BJ (cell line): ENCODE measurements at regions of chr19 and their contacts with region 1.

Region 1: DNA sequence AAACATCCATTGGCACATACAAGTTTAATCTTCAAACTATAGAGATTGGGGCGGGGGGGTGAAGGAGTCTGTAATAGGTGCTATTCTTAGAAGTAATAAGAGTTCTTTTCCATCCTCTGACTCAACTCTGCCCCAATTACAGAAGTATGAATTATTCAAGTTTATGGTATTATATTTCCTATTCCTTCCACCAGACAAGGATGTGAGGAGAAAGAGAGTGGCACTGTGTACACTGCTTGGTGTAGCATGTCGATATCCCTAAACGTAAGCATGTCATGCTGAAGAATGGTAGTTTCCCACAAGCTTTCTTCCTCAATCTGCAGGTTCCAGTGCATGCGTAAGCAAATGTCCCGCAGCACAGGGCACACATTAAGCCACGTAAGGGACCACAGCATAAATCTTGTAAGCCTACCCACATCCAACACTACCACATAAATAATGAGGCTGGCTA is 14.1 kb downstream of the BRD4 start:
- DNase-seq: no peak
- H3K4me3 ChIP-seq: no peak overlapping the region
- H3K27me3 ChIP-seq: no peaks in the 10 kb centered on the region
- CTCF ChIP-seq: no peak

Region 2: GRCh38 chr19:15303105-15303780 is 15.0 kb before region 1 on chr19:
- CTCF ChIA-PET with region 1: interaction called, 5 read pairs
- POLR2A ChIA-PET with region 1: interaction called, 24 read pairs
- DNase-seq: no peak
- H3K4me3 ChIP-seq: no peak overlapping the region
- H3K27me3 ChIP-seq: no peaks in the 10 kb centered on the region
- CTCF ChIP-seq: no peak

Region 3: DNA sequence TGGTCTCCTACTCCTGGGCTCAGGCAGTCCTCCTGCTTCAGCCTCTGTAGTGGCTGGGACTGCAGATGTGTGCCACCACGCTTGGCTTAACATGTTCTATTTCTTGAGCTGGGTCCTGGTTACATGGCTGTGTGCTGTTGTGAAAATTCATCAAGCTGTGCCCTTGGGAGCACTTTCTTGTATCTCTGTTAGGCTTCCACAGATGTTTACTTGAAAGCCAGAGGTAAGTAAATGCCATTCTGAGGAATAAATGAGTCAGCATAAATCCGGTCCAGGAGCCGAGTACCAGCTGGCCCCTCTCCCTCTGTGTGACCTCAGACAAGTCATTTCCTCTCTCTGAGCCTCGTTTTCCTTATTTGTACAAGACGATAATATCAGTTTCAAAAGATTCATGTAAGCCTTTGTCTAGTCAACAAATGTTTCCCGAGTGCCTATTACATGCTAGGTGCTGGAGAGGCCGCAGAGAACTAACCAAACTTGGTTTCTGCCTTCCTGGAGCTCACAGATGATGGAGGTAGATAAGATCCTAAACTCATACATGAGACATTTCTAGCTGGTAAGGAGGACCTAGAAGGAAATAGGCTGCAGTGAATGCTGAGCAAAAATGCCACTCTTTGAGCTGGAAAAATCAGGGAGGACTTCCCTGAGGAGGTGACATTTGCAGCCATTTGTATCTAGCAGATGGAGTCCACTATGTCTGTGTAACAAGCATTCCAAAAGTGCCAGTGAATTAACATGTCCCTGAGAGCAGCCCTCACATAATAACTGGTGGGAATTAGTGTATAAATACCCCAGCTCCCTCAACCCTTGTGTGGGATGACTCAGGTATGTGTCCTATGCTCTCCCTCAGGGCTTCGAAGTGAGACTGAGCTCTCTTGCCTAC is 148.8 kb after region 1 on chr19:
- CTCF ChIA-PET with region 1: no interaction called
- POLR2A ChIA-PET with region 1: no interaction called
- DNase-seq: no peak
- H3K4me3 ChIP-seq: no peak overlapping the region
- H3K27me3 ChIP-seq: peaks cover 9% of the 10 kb centered on the region
- CTCF ChIP-seq: no peak